ENCODE measurements at regions of chr19 and their contacts with region 1.

Region 1: DNA sequence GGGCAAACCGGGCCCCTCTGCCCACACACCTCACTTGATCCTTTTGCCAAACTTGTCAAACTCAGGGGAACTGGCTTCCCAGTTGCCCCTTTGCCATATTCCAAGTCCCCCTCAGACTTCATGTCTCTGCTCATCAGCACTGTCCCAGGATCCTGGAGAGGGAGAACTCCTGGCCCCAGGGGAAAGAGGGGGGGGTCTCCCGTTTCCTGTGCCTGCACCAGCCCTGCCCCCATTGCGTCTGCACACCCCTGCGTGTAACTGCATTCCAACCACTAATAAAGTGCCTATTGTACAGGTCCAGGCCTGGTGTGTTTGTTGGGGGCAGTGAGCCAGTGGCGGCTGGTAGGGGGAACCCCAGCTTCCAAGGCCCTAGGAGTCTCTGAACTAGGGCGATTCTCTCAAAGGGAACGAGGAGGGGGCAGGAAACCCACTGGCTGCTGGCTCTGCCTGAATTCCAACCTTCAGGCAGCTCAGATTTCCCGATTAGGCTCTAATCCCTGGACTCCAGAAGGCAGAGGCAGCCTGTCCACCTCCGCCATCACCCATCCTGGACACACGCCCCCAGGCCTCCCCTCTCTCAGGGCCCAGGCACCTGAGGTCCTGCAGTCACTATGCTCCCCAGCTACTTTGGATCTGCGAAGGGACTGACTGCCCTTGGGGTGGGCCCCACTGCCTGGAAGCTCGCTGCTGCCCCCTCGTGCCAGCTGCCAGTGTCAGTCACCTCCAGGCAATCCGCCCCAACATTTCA is 9.7 kb upstream of the ILF3 start:
- H3K4me3 Mint-ChIP-seq: no peak overlapping the region
- H3K27ac Mint-ChIP-seq: no peak overlapping the region
- H3K4me1 Mint-ChIP-seq: peaks cover 49% of the 10 kb centered on the region
- H3K27me3 Mint-ChIP-seq: peaks cover 31% of the 10 kb centered on the region

Region 2: GRCh38 chr19:10580979-10581631 is 63.3 kb before region 1 on chr19:
- intact Hi-C with region 1: loop called (anchors 1 kb)
- H3K4me3 Mint-ChIP-seq: no peak overlapping the region
- H3K27ac Mint-ChIP-seq: no peak overlapping the region
- H3K4me1 Mint-ChIP-seq: no peaks in the 10 kb centered on the region
- H3K27me3 Mint-ChIP-seq: peaks cover 6% of the 10 kb centered on the region